ENCODE measurements at regions of chr2 and their contacts with region 1.

Region 1: GRCh38 chr2:24329700-24330099 is 30.6 kb downstream of the ITSN2 start:
- DNase-seq: no peak
- ATAC-seq: peak; percentile 67
- H3K4me3 Mint-ChIP-seq: peak overlapping the region; percentile 76
- H3K27ac Mint-ChIP-seq: peak overlapping the region; percentile 94
- H3K4me1 Mint-ChIP-seq: peaks cover 83% of the 10 kb centered on the region
- H3K27me3 Mint-ChIP-seq: no peaks in the 10 kb centered on the region
- CTCF ChIP-seq: no peak

Region 2: DNA sequence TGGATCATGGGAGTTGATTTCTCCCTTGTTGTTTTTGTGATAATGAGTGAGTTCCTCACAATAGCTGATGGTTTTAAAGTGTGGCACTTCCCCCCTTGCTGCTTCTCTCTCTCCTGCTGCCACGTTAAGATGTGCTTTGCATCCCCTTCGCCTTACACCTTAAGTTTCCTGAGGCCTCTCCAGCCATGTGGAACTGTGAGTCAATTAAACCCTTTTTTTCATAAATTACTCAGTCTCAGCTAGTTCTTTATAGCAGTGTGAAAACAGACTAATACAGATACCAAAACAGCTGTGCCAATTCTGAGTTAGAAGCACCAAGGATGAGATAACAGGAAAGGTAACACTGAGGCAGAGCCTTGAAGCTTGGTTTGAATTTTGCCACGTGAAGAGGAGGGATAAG is 14.0 kb before region 1 on chr2:
- CTCF ChIA-PET with region 1: interaction called, 8 read pairs
- POLR2A ChIA-PET with region 1: interaction called, 40 read pairs
- intact Hi-C with region 1: loop called (anchors 1 kb)
- DNase-seq: no peak
- ATAC-seq: peak; percentile 87
- H3K4me3 Mint-ChIP-seq: peak overlapping the region; percentile 50
- H3K27ac Mint-ChIP-seq: peak overlapping the region; percentile 80
- H3K4me1 Mint-ChIP-seq: peaks cover 51% of the 10 kb centered on the region
- H3K27me3 Mint-ChIP-seq: no peaks in the 10 kb centered on the region
- CTCF ChIP-seq: no peak

Region 3: DNA sequence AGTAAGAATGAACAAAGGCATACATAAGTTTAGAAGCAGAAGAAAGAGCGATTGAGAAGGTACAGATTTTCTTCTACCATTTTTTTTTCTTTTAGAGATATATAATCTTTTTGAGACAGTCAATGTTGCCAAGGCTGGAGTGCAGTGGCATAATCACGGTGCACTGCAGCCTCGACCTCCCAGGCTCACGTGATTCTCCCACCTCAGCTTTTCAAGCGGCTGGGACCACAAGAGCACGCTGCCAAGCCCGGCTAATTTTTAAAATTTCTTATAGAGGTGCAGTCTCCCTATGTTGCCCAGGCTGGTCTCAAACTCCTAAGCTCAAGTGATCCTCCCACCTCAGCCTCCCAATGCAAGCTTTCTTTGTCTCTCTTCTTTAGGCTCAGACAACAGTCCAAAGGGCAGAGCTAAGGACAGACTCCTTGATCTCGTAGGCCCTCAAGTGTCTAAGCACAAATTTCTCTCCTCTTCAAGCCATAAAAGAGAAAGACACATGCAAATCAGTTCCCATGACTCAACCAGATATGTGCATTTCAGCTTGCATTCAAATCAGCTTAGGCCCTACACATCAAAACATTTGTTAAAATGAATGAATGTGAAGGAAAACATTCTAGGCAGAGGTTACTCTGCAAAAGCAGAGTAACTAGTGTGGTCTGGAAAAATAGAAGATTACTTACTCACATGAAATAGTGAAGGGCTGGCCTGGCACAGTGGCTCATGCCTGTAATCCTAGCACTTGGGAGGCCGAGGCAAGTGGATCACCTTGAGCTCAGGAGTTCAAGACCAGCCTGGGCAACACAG is 12.6 kb after region 1 on chr2:
- CTCF ChIA-PET with region 1: interaction called, 5 read pairs
- POLR2A ChIA-PET with region 1: interaction called, 44 read pairs
- intact Hi-C with region 1: loop called (anchors 1 kb)
- DNase-seq: no peak
- ATAC-seq: peak; percentile 64
- H3K4me3 Mint-ChIP-seq: peak overlapping the region; percentile 64
- H3K27ac Mint-ChIP-seq: peak overlapping the region; percentile 89
- H3K4me1 Mint-ChIP-seq: peaks cover 93% of the 10 kb centered on the region
- H3K27me3 Mint-ChIP-seq: no peaks in the 10 kb centered on the region
- CTCF ChIP-seq: no peak

Region 4: GRCh38 chr2:24351981-24352380 is 22.3 kb after region 1 on chr2:
- CTCF ChIA-PET with region 1: no interaction called
- POLR2A ChIA-PET with region 1: interaction called, 10 read pairs
- intact Hi-C with region 1: no loop called
- DNase-seq: no peak
- ATAC-seq: no peak
- H3K4me3 Mint-ChIP-seq: no peak overlapping the region
- H3K27ac Mint-ChIP-seq: no peak overlapping the region
- H3K4me1 Mint-ChIP-seq: peaks cover 84% of the 10 kb centered on the region
- H3K27me3 Mint-ChIP-seq: no peaks in the 10 kb centered on the region
- CTCF ChIP-seq: no peak

Region 5: GRCh38 chr2:24360050-24360962 is 30.6 kb after region 1 on chr2 and contains the start of gene ITSN2:
- CTCF ChIA-PET with region 1: no interaction called
- POLR2A ChIA-PET with region 1: interaction called, 95 read pairs
- intact Hi-C with region 1: loop called (anchors 1 kb)
- DNase-seq: peak; percentile 88
- ATAC-seq: peak; percentile 85
- H3K4me3 Mint-ChIP-seq: peak within 1 kb of the TSS; percentile 91
- H3K27ac Mint-ChIP-seq: peak within 1 kb of the TSS; percentile 97
- H3K4me1 Mint-ChIP-seq: peaks cover 50% of the 10 kb centered on the region
- H3K27me3 Mint-ChIP-seq: no peaks in the 10 kb centered on the region
- CTCF ChIP-seq: no peak
- total RNA-seq, gene ITSN2: 147 and 156 TPM in 2 replicates

Region 6: GRCh38 chr2:24421668-24422067 is 92.0 kb after region 1 on chr2:
- CTCF ChIA-PET with region 1: no interaction called
- POLR2A ChIA-PET with region 1: no interaction called
- intact Hi-C with region 1: no loop called
- DNase-seq: peak; percentile 26
- ATAC-seq: peak; percentile 65
- H3K4me3 Mint-ChIP-seq: no peak overlapping the region
- H3K27ac Mint-ChIP-seq: no peak overlapping the region
- H3K4me1 Mint-ChIP-seq: no peaks in the 10 kb centered on the region
- H3K27me3 Mint-ChIP-seq: peaks cover 2% of the 10 kb centered on the region
- CTCF ChIP-seq: no peak

Measured in activated B cell treated with CpG ODN at 0.5 μM for 24 hours (primary cell).